ENCODE measurements at regions of chr5 and their contacts with region 1.

Region 1: DNA sequence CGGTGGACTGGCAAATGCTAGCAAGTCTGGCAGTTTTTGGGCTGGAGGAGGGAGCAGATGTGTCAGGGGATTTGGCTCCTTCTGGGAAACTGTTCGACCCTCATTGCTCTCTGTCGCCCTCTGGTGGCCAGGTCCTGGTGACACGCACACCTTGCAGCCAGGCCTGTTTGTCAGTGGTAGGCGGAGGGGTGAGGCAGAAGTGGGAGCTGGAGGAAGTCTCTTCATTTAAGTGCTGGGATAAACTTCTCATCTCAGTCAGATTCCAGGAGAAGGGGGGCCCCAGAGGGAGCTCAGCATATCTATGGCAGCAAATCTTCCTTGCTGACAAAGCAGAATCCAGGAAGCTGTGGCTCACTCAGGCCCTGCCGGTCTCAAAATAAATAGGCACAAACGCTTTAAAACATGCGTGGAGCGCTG is 326.5 kb downstream of the ZSWIM6 start:
- DNase-seq: peak; percentile 93
- H3K4me3 Mint-ChIP-seq: no peak overlapping the region
- H3K27ac Mint-ChIP-seq: no peak overlapping the region
- H3K4me1 Mint-ChIP-seq: no peaks in the 10 kb centered on the region
- H3K27me3 Mint-ChIP-seq: peaks cover 4% of the 10 kb centered on the region

Region 2: GRCh38 chr5:60959156-60959555 is 699.4 kb before region 1 on chr5:
- intact Hi-C with region 1: loop called (anchors 1 kb)
- DNase-seq: no peak
- H3K4me3 Mint-ChIP-seq: no peak overlapping the region
- H3K27ac Mint-ChIP-seq: no peak overlapping the region
- H3K4me1 Mint-ChIP-seq: no peaks in the 10 kb centered on the region
- H3K27me3 Mint-ChIP-seq: peaks cover 1% of the 10 kb centered on the region

Region 3: DNA sequence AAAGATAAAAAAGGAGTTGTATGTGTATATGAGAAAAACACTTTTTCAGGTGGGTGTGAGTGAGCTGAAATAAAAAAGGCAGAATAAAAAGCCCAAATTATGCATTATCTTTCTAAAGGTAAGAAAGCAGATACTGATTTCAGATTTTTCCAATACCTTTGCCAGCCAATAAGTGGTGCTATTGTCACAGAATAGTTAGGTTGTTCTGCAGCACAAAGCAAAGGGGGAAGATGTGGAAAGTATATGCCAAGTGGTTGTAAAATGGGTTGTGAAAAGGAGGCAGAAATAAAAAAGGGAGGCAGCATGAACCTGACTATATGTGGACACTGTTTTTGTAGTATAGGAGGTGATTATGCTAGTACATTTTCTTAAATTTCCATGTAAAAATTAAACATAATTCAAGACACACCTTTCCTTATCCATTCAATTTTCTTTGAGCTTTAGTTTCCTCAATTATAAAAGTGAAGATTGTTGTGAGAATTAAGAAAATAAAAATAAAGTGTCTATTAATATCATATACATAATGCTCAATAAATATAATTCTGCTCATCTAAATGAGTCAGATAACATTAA is 603.1 kb before region 1 on chr5:
- intact Hi-C with region 1: loop called (anchors 1 kb)
- DNase-seq: peak; percentile 69
- H3K4me3 Mint-ChIP-seq: no peak overlapping the region
- H3K27ac Mint-ChIP-seq: no peak overlapping the region
- H3K4me1 Mint-ChIP-seq: no peaks in the 10 kb centered on the region
- H3K27me3 Mint-ChIP-seq: no peaks in the 10 kb centered on the region

Region 4: GRCh38 chr5:61534481-61535267 is 123.9 kb before region 1 on chr5:
- intact Hi-C with region 1: no loop called
- DNase-seq: peak; percentile 69
- H3K4me3 Mint-ChIP-seq: no peak overlapping the region
- H3K27ac Mint-ChIP-seq: peak overlapping the region; percentile 42
- H3K4me1 Mint-ChIP-seq: peaks cover 11% of the 10 kb centered on the region
- H3K27me3 Mint-ChIP-seq: no peaks in the 10 kb centered on the region

Region 5: DNA sequence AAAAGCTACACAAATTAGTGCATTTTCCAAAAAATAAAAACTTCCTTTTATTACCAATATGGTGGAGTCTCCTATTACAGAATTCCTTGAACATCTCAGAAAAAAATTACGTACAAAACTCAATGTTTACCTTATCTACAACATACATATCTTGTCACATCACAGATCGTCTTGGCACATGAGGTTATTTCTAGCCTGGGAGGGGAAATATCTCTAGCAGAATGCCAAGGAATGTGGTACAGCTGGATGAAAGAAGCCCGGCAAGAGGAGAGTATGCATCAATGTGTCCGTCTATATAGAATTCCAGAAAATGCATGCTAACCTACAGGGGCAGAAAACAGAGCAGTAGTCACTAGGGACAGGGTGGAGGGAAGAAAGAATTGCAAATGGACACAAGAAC is 117.3 kb after region 1 on chr5:
- intact Hi-C with region 1: no loop called
- DNase-seq: no peak
- H3K4me3 Mint-ChIP-seq: no peak overlapping the region
- H3K27ac Mint-ChIP-seq: no peak overlapping the region
- H3K4me1 Mint-ChIP-seq: no peaks in the 10 kb centered on the region
- H3K27me3 Mint-ChIP-seq: no peaks in the 10 kb centered on the region

Measured in activated CD4-positive, alpha-beta T cell treated with anti-CD3 and anti-CD28 coated beads, Interleukin-2, amount 10 ng/mL, durations not matched to agents 24 days and 14 days (primary cell).